Activated CD8-positive, alpha-beta memory T cell treated with anti-CD3 and anti-CD28 coated beads, Interleukin-2, amount 10 ng/mL, durations not matched to agents 7 days and 5 days (primary cell): ENCODE measurements at regions of chr16 and their contacts with region 1.

Region 1: GRCh38 chr16:57757326-57757786 is 21.8 kb downstream of the KATNB1 start:
- DNase-seq: peak; percentile 91
- ATAC-seq: peak; percentile 97
- H3K4me3 Mint-ChIP-seq: no peak overlapping the region
- H3K27ac Mint-ChIP-seq: no peak overlapping the region
- H3K4me1 Mint-ChIP-seq: peaks cover 5% of the 10 kb centered on the region
- H3K27me3 Mint-ChIP-seq: no peaks in the 10 kb centered on the region

Region 2: DNA sequence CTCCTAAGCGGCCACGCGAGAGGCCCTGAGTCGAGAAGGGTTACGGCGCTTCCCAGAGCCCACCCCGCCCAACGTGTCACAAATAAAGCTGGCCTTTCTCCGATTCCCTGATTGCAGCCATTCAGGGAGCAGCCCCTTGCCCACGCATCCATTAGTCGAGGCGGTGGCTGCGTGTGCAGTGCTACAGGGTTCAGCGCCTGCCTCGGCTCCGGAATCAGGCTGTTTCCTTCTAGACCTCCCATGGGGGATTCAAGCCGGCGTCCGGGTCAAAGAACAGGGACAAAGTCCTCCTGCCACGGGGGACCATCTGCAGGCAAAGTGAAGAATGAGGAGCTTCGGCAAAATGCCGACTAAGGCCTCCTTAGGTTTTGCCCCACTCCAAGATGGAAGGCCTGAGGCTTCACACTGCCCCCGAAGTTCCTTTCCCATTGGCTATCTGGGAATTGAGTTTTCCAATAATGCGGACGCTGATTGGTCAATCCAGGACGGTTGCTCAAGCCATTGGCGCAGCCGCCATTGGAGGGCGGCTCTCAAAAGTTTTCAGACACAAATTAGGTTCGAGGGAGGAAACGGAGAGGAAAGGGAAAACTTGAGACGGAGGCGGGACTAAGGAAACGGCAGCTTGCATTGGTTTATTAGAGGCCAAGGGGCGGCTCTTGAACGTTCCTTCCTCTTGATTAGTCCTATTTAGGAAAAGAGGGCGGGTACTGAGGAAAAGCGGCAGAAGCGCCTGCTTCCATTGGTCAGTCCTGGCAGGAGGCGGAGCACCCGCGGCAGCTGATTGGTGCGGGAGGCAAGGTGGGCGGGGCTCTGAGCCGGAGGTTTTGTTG is 22.2 kb before region 1 on chr16:
- CTCF ChIA-PET with region 1: interaction called, 17 read pairs
- DNase-seq: peak; percentile 99
- ATAC-seq: peak; percentile 90
- H3K4me3 Mint-ChIP-seq: peak overlapping the region; percentile 92
- H3K27ac Mint-ChIP-seq: peak overlapping the region; percentile 92
- H3K4me1 Mint-ChIP-seq: peaks cover 32% of the 10 kb centered on the region
- H3K27me3 Mint-ChIP-seq: no peaks in the 10 kb centered on the region

Region 3: GRCh38 chr16:57852189-57852588 is 94.8 kb after region 1 on chr16:
- CTCF ChIA-PET with region 1: no interaction called
- DNase-seq: no peak
- ATAC-seq: no peak
- H3K4me3 Mint-ChIP-seq: no peak overlapping the region
- H3K27ac Mint-ChIP-seq: no peak overlapping the region
- H3K4me1 Mint-ChIP-seq: no peaks in the 10 kb centered on the region
- H3K27me3 Mint-ChIP-seq: peaks cover 30% of the 10 kb centered on the region

Region 4: DNA sequence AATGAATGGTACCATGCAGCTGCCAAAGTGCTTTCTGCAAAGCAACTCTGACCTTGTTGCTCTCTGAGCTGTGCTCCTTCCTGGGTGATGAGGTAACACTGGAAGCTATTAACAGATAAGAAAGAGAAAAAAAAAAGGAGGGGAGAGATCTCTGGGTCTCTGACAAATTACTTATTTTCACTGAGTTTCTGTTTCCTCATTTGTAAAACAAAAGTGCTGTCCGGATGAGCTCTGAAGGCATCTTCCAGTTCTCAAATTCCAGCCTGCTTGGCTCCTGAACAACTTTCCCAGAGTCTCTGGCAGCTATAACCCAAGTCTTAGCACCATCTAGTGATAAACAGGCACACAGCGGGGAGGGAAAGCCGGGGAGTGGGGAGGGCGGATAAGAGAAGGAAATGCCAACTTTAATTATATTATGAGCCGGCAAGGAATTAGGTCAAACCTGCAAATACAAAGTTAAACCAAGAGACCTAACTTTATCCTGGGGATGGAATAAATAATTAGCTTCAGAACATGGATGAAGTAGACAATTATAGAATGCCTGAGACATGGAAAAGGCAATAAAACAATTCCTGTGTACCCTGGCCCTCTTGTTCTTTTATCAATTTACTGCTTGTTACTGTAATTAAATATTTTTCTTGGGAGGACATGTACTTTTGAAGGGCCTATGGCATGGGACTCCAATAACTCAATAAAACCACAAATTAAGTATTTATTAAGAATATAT is 106.2 kb after region 1 on chr16:
- CTCF ChIA-PET with region 1: interaction called, 12 read pairs
- DNase-seq: no peak
- ATAC-seq: no peak
- H3K4me3 Mint-ChIP-seq: no peak overlapping the region
- H3K27ac Mint-ChIP-seq: no peak overlapping the region
- H3K4me1 Mint-ChIP-seq: no peaks in the 10 kb centered on the region
- H3K27me3 Mint-ChIP-seq: peaks cover 33% of the 10 kb centered on the region